ENCODE measurements at regions of chr7 and their contacts with region 1.

Region 1: GRCh38 chr7:112546723-112547513 is 66.1 kb downstream of the LSMEM1 start:
- DNase-seq: no peak
- H3K4me3 ChIP-seq: no peak overlapping the region
- CTCF ChIP-seq: no peak
- POLR2A ChIP-seq: no peak

Region 2: DNA sequence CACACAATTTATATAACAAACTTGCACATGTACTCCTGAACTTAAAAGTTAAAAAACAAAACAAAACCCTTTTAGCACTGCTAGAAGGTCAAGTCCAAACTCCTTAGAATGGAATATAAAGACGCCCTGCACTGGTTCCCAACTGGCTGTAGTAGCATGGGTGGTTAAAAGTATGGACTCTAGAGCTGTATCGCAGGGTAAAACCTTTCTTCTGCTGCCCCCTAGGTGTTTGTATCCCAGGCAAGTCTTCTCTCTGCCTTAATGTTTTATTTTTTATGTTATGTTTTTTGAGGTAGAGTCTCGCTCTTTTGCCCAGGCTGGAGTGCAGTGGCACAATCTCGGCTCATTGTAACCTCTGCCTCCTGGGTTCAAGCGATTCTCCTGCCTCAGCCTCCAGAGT is 30.9 kb before region 1 on chr7:
- intact Hi-C with region 1: no loop called
- DNase-seq: no peak
- H3K4me3 ChIP-seq: no peak overlapping the region
- CTCF ChIP-seq: no peak
- POLR2A ChIP-seq: no peak

Region 3: DNA sequence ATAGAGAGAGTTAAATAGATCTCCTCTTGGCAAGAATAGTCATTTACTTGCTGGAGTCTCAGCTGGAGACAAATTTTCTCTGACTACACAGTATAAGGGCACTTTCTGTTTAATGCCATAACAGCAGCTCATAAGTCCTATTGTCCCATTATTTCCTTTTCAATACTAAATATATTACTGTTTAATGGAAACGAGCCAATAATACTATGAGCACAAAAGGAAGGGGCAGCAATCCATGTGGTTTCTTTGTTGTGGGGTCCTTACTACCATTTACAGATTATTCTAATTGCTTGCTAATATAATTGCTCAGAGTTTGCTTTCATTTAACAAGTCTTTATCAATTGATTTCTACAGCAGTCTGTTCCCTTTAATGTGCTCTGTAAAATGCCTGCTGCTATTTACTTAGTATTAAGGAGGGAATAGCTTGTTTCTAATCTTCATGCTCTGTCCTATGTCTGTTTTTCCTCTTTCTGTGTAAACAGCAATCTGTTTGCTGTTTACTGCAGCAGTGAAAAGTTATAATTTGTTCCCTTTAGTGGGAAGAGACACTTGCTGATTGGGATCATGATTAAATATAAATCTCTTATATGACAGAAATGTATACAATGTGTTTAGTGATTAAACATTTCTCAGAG is 867.6 kb after region 1 on chr7:
- intact Hi-C with region 1: loop called (anchors 5 kb)
- DNase-seq: no peak
- H3K4me3 ChIP-seq: no peak overlapping the region
- CTCF ChIP-seq: no peak
- POLR2A ChIP-seq: no peak

Measured in lower leg skin (tissue), 4 donors.